ENCODE measurements at regions of chr7 and their contacts with region 1.

Region 1: DNA sequence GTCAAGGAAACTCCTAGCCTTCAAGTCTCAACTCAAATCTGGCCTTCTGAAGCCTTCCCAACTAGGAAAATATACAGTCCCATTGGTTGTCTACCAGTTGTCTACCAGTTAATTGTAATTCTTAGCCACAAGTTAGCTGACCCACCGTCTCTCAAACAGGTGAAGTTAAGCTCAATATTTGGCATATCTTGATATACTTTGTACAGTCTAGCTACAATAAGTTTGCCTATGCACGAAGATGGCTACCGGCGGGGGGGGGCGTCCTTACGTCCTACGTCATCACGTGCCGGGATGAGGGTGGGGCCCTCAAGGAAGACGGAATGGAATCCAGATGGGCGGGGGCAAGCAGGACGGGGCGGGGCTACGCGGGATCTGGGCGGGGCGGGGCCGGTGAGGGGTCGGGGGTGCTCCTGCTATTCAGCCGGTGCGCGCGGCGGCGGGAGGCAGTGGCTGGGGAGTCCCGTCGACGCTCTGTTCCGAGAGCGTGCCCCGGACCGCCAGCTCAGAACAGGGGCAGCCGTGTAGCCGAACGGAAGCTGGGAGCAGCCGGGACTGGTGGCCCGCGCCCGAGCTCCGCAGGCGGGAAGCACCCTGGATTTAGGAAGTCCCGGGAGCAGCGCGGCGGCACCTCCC is at the start of gene AHR:
- DNase-seq: peak; percentile 85 to 87
- H3K4me3 ChIP-seq: peak within 1 kb of the TSS; percentile 83
- H3K27ac ChIP-seq: peak within 1 kb of the TSS; percentile 68
- H3K4me1 ChIP-seq: peaks cover 36% of the 10 kb centered on the region
- H3K27me3 ChIP-seq: no peaks in the 10 kb centered on the region
- CTCF ChIP-seq: no peak
- total RNA-seq, gene AHR: 46.4 and 61.3 TPM in 2 replicates

Region 2: GRCh38 chr7:16645593-16646471 is 652.5 kb before region 1 on chr7 and contains the starts of genes ANKMY2 and BZW2:
- CTCF ChIA-PET with region 1: no interaction called
- POLR2A ChIA-PET with region 1: interaction called, 6 read pairs
- intact Hi-C with region 1: loop called (anchors 5 kb)
- DNase-seq: peak; percentile 96 to 98
- H3K4me3 ChIP-seq: peak within 1 kb of the TSS; percentile 77
- H3K27ac ChIP-seq: peak within 1 kb of the TSS; percentile 82
- H3K4me1 ChIP-seq: peaks cover 51% of the 10 kb centered on the region
- H3K27me3 ChIP-seq: no peaks in the 10 kb centered on the region
- CTCF ChIP-seq: no peak
- total RNA-seq, gene ANKMY2: 22.9 and 30.7 TPM in 2 replicates
- total RNA-seq, gene BZW2: 93.7 and 102 TPM in 2 replicates

Region 3: GRCh38 chr7:16786257-16786656 is 512.1 kb before region 1 on chr7:
- CTCF ChIA-PET with region 1: no interaction called
- POLR2A ChIA-PET with region 1: interaction called, 38 read pairs
- intact Hi-C with region 1: no loop called
- DNase-seq: no peak
- H3K4me3 ChIP-seq: no peak overlapping the region
- H3K27ac ChIP-seq: no peak overlapping the region
- H3K4me1 ChIP-seq: no peaks in the 10 kb centered on the region
- H3K27me3 ChIP-seq: no peaks in the 10 kb centered on the region
- CTCF ChIP-seq: no peak

Region 4: GRCh38 chr7:17031906-17032539 is 266.3 kb before region 1 on chr7:
- CTCF ChIA-PET with region 1: no interaction called
- POLR2A ChIA-PET with region 1: interaction called, 14 read pairs
- intact Hi-C with region 1: no loop called
- DNase-seq: peak in 1 of 2 experiments; percentile 56
- H3K4me3 ChIP-seq: no peak overlapping the region
- H3K27ac ChIP-seq: no peak overlapping the region
- H3K4me1 ChIP-seq: peaks cover 15% of the 10 kb centered on the region
- H3K27me3 ChIP-seq: no peaks in the 10 kb centered on the region
- CTCF ChIP-seq: no peak

Region 5: DNA sequence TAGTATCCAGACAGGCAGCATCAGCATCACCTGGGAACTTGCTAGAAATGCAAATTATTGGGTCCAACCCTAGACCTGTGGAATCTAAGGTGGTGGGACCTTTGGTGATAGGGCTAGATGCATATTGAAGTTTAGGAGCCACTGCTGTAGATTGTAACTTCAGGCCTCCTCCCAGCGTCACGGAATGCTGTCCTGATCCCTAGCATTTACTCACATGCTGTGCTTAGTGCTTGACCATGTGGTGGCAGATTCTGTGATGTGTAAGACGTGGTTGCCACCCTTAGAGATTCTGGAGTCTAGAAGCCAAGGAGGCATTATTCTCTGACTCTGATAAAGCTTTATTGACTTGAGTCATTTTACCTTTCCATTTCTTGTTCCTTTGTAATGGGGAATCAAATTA is 13.6 kb after region 1 on chr7:
- CTCF ChIA-PET with region 1: no interaction called
- POLR2A ChIA-PET with region 1: no interaction called
- intact Hi-C with region 1: no loop called
- DNase-seq: no peak
- H3K4me3 ChIP-seq: no peak overlapping the region
- H3K27ac ChIP-seq: no peak overlapping the region
- H3K4me1 ChIP-seq: peaks cover 10% of the 10 kb centered on the region
- H3K27me3 ChIP-seq: no peaks in the 10 kb centered on the region
- CTCF ChIP-seq: no peak

Region 6: DNA sequence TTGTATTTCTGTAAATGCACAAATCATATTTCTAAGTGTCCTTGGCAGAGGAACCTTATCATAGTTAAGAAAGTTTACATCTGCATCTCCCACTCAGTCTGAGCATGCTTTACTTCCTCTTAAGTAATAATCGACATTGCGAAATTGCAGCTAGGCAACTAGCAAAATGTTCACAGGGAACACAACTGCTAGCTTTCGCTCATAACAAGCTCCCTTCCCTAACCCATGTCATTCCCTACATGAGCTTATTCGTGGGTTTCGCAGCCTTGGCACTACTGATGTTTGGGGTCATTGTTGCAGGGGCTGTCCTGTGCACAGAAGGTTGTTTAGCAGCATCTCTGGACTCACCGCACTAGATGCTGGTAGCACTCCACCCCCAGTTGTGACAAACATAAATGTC is 71.8 kb after region 1 on chr7:
- CTCF ChIA-PET with region 1: interaction called, 3 read pairs
- POLR2A ChIA-PET with region 1: interaction called, 4 read pairs
- intact Hi-C with region 1: loop called (anchors 2 kb)
- DNase-seq: peak; percentile 56 to 76
- H3K4me3 ChIP-seq: no peak overlapping the region
- H3K27ac ChIP-seq: peak overlapping the region; percentile 94
- H3K4me1 ChIP-seq: peaks cover 51% of the 10 kb centered on the region
- H3K27me3 ChIP-seq: no peaks in the 10 kb centered on the region
- CTCF ChIP-seq: no peak

Region 7: GRCh38 chr7:17530741-17531417 is 232.6 kb after region 1 on chr7:
- CTCF ChIA-PET with region 1: no interaction called
- POLR2A ChIA-PET with region 1: no interaction called
- intact Hi-C with region 1: loop called (anchors 5 kb)
- DNase-seq: no peak
- H3K4me3 ChIP-seq: no peak overlapping the region
- H3K27ac ChIP-seq: no peak overlapping the region
- H3K4me1 ChIP-seq: peaks cover 20% of the 10 kb centered on the region
- H3K27me3 ChIP-seq: no peaks in the 10 kb centered on the region
- CTCF ChIP-seq: no peak